Activated T-helper 2 cell treated with anti-CD3 and anti-CD28 coated beads, Interferon-gamma antibody, Interleukin-2, Interleukin-4, amounts not matched to agents 10 μg/mL and 5 μg/mL and 100 μg/mL, durations not matched to agents 14 hours and 24 hours and 36 hours (primary cell): ENCODE measurements at regions of chr5 and their contacts with region 1.

Region 1: GRCh38 chr5:152532714-152533113 is 127.6 kb upstream of the NMUR2 start:
- DNase-seq: no peak
- H3K4me3 Mint-ChIP-seq: no peak overlapping the region
- H3K27ac Mint-ChIP-seq: no peak overlapping the region
- H3K4me1 Mint-ChIP-seq: peaks cover 9% of the 10 kb centered on the region
- H3K27me3 Mint-ChIP-seq: peaks cover 12% of the 10 kb centered on the region

Region 2: GRCh38 chr5:153147891-153148623 is 615.3 kb after region 1 on chr5:
- intact Hi-C with region 1: loop called (anchors 2 kb)
- DNase-seq: no peak
- H3K4me3 Mint-ChIP-seq: no peak overlapping the region
- H3K27ac Mint-ChIP-seq: no peak overlapping the region
- H3K4me1 Mint-ChIP-seq: no peaks in the 10 kb centered on the region
- H3K27me3 Mint-ChIP-seq: no peaks in the 10 kb centered on the region

Region 3: DNA sequence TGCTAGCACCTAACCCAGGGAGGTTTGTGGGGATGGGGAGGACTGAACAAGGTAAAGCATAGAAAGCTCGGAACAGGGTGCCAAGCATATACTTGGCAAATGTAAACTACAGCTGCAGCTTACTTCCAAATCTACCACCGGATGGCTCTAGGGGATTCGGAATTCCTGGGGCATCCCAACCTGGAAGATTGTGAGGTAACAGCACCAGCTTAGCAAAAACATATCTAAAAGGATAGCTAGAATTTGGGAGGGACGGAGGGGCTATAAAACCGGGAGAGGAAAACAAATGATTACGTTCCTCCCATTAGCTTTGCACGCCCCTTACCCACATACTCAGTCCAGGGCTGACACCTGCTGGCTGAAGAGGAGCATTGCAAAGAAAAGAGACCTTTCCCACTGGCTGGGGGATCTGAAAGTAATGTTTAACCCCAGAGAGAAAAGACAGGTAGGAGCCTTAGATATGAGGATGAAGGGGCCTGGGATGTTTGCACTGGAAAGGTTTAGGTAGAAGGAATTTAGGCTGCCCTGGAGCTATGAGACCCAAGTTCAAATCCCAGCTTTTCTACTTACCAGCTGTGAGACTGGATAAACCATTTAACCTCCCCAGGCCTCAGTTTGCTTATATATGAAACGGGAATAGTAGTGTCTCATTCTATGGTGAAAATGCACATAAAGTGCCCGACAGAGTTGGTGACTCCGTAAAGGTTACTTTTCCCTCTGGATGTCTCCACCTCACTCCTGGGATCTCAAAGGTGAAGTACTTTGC is 1432.3 kb after region 1 on chr5:
- intact Hi-C with region 1: loop called (anchors 1 kb)
- DNase-seq: no peak
- H3K4me3 Mint-ChIP-seq: no peak overlapping the region
- H3K27ac Mint-ChIP-seq: no peak overlapping the region
- H3K4me1 Mint-ChIP-seq: peaks cover 6% of the 10 kb centered on the region
- H3K27me3 Mint-ChIP-seq: peaks cover 6% of the 10 kb centered on the region